PC-9 (cell line): ENCODE measurements at regions of chr9 and their contacts with region 1.

Region 1: GRCh38 chr9:95744321-95744720 is 131.2 kb upstream of the ERCC6L2 start:
- DNase-seq: no peak
- H3K4me3 ChIP-seq: no peak overlapping the region
- H3K27ac ChIP-seq: no peak overlapping the region
- H3K4me1 ChIP-seq: no peaks in the 10 kb centered on the region
- H3K27me3 ChIP-seq: peaks cover 4% of the 10 kb centered on the region; the same call in 1 of the 2 replicates
- CTCF ChIP-seq: peak; percentile 28; the same call in 1 of the 2 replicates

Region 2: DNA sequence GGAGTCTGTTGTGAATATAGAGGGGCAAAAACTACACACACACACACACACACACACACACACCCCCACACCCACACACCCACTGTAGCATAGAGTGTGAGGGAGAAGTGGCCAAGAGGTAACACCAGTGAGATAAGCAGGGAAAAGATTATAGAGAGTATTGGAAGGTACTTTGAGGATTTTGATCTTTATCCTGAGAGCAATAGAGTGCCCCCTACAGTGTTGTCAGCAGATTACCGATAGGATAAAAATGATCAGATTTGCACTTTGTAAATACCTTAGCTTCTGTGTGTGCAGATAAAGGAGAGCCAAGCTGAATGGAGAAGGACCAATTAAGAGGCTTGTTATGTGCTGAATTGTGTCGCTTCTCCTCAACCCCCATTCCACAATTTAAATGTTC is 163.5 kb after region 1 on chr9:
- CTCF ChIA-PET with region 1: no interaction called
- POLR2A ChIA-PET with region 1: no interaction called
- intact Hi-C with region 1: loop called (anchors 10 kb)
- DNase-seq: no peak
- H3K4me3 ChIP-seq: no peak overlapping the region
- H3K27ac ChIP-seq: no peak overlapping the region
- H3K4me1 ChIP-seq: no peaks in the 10 kb centered on the region
- H3K27me3 ChIP-seq: no peaks in the 10 kb centered on the region
- CTCF ChIP-seq: peak; percentile 30; the same call in 1 of the 2 replicates

Region 3: GRCh38 chr9:96136992-96137670 is 392.8 kb after region 1 on chr9:
- CTCF ChIA-PET with region 1: interaction called, 12 read pairs
- POLR2A ChIA-PET with region 1: no interaction called
- intact Hi-C with region 1: no loop called
- DNase-seq: peak in 1 of 2 experiments; percentile 5
- H3K4me3 ChIP-seq: no peak overlapping the region
- H3K27ac ChIP-seq: no peak overlapping the region
- H3K4me1 ChIP-seq: no peaks in the 10 kb centered on the region
- H3K27me3 ChIP-seq: peaks cover 50% of the 10 kb centered on the region
- CTCF ChIP-seq: no peak